T-cell (primary cell): ENCODE measurements at regions of chr3 and their contacts with region 1.

Region 1: DNA sequence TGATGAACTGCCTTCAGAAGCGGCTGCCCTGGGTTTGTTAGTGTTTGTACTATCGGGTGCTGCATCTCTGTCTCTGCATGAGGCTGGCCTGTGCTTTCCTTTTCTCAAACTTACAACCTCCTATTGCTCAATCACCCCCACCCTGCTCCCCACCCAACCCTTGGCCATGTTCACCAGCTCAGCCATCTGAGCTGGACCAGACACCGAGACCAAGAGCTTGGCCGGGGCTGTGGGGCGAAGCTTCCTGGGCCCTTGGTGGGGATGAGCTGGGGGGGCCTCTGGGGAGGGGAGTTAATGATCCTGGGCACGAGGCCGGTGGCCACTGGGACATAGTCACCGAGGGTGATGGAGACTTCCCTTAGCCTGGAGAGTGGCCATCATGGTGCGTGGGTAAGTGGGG is 16.8 kb upstream of the FBLN2 start:
- DNase-seq: no peak
- ATAC-seq: no peak
- H3K4me3 ChIP-seq: no peak overlapping the region
- H3K4me3 Mint-ChIP-seq: no peak overlapping the region
- H3K27ac ChIP-seq: no peak overlapping the region
- H3K27ac Mint-ChIP-seq: no peak overlapping the region
- H3K4me1 ChIP-seq: peaks cover 3 to 12% of the 10 kb centered on the region in 2 experiments
- H3K4me1 Mint-ChIP-seq: peaks cover 6 to 10% (median 8%) of the 10 kb centered on the region in 3 donors
- H3K27me3 ChIP-seq: peaks cover 0 to 48% of the 10 kb centered on the region in 2 experiments
- H3K27me3 Mint-ChIP-seq: peaks cover 4 to 33% of the 10 kb centered on the region in 2 donors

Region 2: DNA sequence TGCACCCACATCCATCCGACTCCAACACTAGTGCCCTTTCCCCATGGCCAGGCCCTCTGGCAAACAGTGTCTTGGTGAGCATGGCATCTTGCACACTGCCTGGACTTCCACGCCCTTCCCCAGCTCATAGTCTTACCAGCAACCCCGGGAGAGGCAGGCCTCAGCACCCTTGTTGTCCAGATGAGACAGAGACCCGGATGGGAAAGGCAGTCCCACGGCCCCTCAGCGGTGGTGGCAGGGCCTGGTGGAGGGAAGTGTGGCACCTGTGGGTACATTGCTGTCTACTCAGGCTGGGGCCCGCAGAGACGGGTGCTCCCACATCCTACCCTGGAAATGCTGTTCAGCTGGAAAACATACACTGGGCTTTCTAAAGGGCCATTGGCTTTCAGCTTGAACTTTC is 23.6 kb before region 1 on chr3:
- CTCF ChIA-PET with region 1: no interaction called
- POLR2A ChIA-PET with region 1: no interaction called
- DNase-seq: no peak
- ATAC-seq: no peak
- H3K4me3 ChIP-seq: no peak overlapping the region
- H3K4me3 Mint-ChIP-seq: no peak overlapping the region
- H3K27ac ChIP-seq: no peak overlapping the region
- H3K27ac Mint-ChIP-seq: no peak overlapping the region
- H3K4me1 ChIP-seq: no peaks in the 10 kb centered on the region
- H3K4me1 Mint-ChIP-seq: no peaks in the 10 kb centered on the region
- H3K27me3 ChIP-seq: no peaks in the 10 kb centered on the region
- H3K27me3 Mint-ChIP-seq: no peaks in the 10 kb centered on the region

Region 3: GRCh38 chr3:13657660-13658435 is 125.7 kb after region 1 on chr3:
- CTCF ChIA-PET with region 1: interaction called in 1 of 2 experiments, 10 read pairs
- POLR2A ChIA-PET with region 1: no interaction called
- DNase-seq: peak; percentile 26 to 84 (median 63)
- ATAC-seq: peak; percentile 72 to 85 (median 78)
- H3K4me3 ChIP-seq: no peak overlapping the region
- H3K4me3 Mint-ChIP-seq: no peak overlapping the region
- H3K27ac ChIP-seq: no peak overlapping the region
- H3K27ac Mint-ChIP-seq: no peak overlapping the region
- H3K4me1 ChIP-seq: peaks cover 5 to 38% of the 10 kb centered on the region in 2 experiments
- H3K4me1 Mint-ChIP-seq: peaks cover 27 to 32% (median 32%) of the 10 kb centered on the region in 3 donors
- H3K27me3 ChIP-seq: peaks cover 3 to 47% of the 10 kb centered on the region in 2 experiments
- H3K27me3 Mint-ChIP-seq: peaks cover 0 to 15% of the 10 kb centered on the region in 2 donors

Region 4: DNA sequence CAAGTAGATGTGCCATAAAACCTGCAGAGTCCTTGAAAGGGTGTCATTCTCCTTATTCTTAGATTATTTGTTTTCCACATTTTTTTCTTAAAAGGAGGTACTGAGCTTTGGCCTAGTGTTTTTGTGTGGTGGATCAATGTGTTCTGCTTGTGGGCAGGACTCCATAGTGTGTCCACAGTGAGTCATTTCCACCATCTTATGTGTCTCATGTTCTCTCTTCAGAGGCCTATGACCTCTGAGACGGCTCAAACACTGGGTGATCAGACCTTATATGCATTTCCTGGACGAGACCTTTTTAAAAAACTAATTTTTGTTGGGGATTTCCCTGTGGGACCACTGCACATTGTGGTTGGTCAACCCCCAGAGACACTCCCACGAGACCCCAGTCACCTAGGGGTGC is 499.1 kb after region 1 on chr3:
- CTCF ChIA-PET with region 1: no interaction called
- POLR2A ChIA-PET with region 1: no interaction called
- DNase-seq: no peak
- ATAC-seq: no peak
- H3K4me3 ChIP-seq: no peak overlapping the region
- H3K4me3 Mint-ChIP-seq: no peak overlapping the region
- H3K27ac ChIP-seq: no peak overlapping the region
- H3K27ac Mint-ChIP-seq: no peak overlapping the region
- H3K4me1 ChIP-seq: no peaks in the 10 kb centered on the region
- H3K4me1 Mint-ChIP-seq: no peaks in the 10 kb centered on the region
- H3K27me3 ChIP-seq: peaks cover 0 to 3% of the 10 kb centered on the region in 2 experiments
- H3K27me3 Mint-ChIP-seq: peaks cover 1 to 11% of the 10 kb centered on the region in 2 donors